ENCODE measurements at regions of chr20 and their contacts with region 1.

Region 1: GRCh38 chr20:54649511-54649962 is 174.1 kb downstream of the DOK5 start:
- DNase-seq: peak; percentile 34 to 91
- H3K4me3 ChIP-seq: no peak overlapping the region
- H3K27ac ChIP-seq: no peak overlapping the region
- H3K4me1 ChIP-seq: no peaks in the 10 kb centered on the region
- H3K27me3 ChIP-seq: no peaks in the 10 kb centered on the region
- CTCF ChIP-seq: peak; percentile 48 to 83 (median 64)
- EP300 ChIP-seq: no peak
- POLR2A ChIP-seq: no peak
- RAD21 ChIP-seq: peak; percentile 64 to 80

Region 2: GRCh38 chr20:54199721-54200176 is 449.8 kb before region 1 on chr20:
- CTCF ChIA-PET with region 1: interaction called, 15 read pairs
- POLR2A ChIA-PET with region 1: no interaction called
- DNase-seq: peak; percentile 70 to 91
- H3K4me3 ChIP-seq: no peak overlapping the region
- H3K27ac ChIP-seq: no peak overlapping the region
- H3K4me1 ChIP-seq: peaks cover 0 to 4% (median 2%) of the 10 kb centered on the region in 4 experiments; a peak in 2 of 7 replicates
- H3K27me3 ChIP-seq: no peaks in the 10 kb centered on the region
- CTCF ChIP-seq: peak; percentile 85 to 89 (median 86)
- EP300 ChIP-seq: no peak
- POLR2A ChIP-seq: no peak
- RAD21 ChIP-seq: peak; percentile 94 to 97

Region 3: GRCh38 chr20:54219751-54220426 is 429.6 kb before region 1 on chr20:
- CTCF ChIA-PET with region 1: interaction called, 27 read pairs
- POLR2A ChIA-PET with region 1: no interaction called
- DNase-seq: no peak
- H3K4me3 ChIP-seq: no peak overlapping the region
- H3K27ac ChIP-seq: no peak overlapping the region
- H3K4me1 ChIP-seq: peaks cover 0 to 12% (median 11%) of the 10 kb centered on the region in 4 experiments; a peak in 5 of 7 replicates
- H3K27me3 ChIP-seq: no peaks in the 10 kb centered on the region
- CTCF ChIP-seq: peak in 2 of 3 experiments; percentile 22 to 23; a peak in 2 of 4 replicates
- EP300 ChIP-seq: no peak
- POLR2A ChIP-seq: no peak
- RAD21 ChIP-seq: peak; percentile 64 to 70

Region 4: DNA sequence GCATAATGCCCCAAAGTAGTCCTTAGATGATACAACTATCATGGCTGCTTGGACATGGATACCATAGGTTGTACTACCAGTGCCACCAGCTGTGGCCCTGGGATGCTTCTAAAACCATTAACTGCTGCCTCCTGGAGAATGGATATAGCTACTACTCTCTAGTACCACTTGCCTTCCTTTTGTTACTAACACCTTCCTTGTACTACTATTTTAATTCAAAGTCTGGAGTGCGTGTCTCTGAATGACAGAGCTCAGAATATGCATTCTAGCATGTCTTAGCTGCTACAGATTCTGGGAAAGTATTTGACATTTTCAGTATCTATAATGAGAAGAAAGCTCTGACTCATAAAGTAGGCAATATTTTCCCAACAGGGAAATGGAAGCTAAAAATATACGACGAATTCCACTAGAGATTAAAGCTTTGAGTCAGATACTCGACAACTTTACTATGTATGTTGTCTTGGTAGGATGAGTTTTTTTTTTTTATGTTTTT is 329.4 kb before region 1 on chr20:
- CTCF ChIA-PET with region 1: interaction called, 11 read pairs
- POLR2A ChIA-PET with region 1: no interaction called
- DNase-seq: no peak
- H3K4me3 ChIP-seq: no peak overlapping the region
- H3K27ac ChIP-seq: no peak overlapping the region
- H3K4me1 ChIP-seq: no peaks in the 10 kb centered on the region
- H3K27me3 ChIP-seq: no peaks in the 10 kb centered on the region
- CTCF ChIP-seq: peak in 2 of 3 experiments; percentile 9 to 22; a peak in 2 of 4 replicates
- EP300 ChIP-seq: no peak
- POLR2A ChIP-seq: no peak
- RAD21 ChIP-seq: peak; percentile 31 to 46; a peak in 3 of 4 replicates

Region 5: GRCh38 chr20:54782079-54782733 is 132.7 kb after region 1 on chr20:
- CTCF ChIA-PET with region 1: no interaction called
- POLR2A ChIA-PET with region 1: no interaction called
- DNase-seq: no peak
- H3K4me3 ChIP-seq: no peak overlapping the region
- H3K27ac ChIP-seq: no peak overlapping the region
- H3K4me1 ChIP-seq: no peaks in the 10 kb centered on the region
- H3K27me3 ChIP-seq: no peaks in the 10 kb centered on the region
- CTCF ChIP-seq: no peak
- EP300 ChIP-seq: no peak
- POLR2A ChIP-seq: no peak
- RAD21 ChIP-seq: no peak